K562 (cell line): ENCODE measurements at regions of chr16 and their contacts with region 1.

Region 1: DNA sequence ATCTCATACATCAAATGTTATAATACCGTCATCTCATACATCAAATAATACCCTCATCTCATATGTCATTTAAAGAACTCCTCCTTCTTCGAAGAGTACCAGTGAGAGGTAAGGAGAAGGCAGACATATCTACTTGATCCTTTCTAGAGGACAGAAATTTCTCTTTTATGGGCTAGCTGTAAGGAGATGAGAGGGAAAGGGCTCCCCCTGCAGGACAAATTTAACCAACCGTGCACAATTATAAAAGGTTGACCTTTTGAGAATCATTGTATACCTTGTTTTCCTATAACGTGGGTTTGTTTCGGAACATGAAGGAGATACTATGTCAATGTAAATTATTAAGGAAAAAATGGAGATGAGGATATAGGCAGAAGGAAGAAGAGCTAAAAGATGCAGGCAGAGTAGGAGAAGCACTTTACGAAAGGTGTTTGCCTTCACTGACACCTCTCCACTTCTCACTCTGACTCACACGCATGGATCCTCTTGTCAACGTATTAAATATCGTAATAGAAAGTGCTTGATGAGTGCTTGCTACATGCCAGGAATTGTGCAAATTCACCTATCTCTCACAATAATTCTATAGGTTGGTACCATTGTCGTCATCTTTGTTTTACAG is 465.9 kb upstream of the ERCC4 start:
- DNase-seq: peak; percentile 26 to 50 (median 38)
- ATAC-seq: peak; percentile 58; the same call in 2 of the 3 replicates
- H3K4me3 ChIP-seq: no peak overlapping the region
- H3K27ac ChIP-seq: no peak overlapping the region
- H3K4me1 ChIP-seq: no peaks in the 10 kb centered on the region
- H3K27me3 ChIP-seq: no peaks in the 10 kb centered on the region
- CTCF ChIP-seq: peak; percentile 35 to 72 (median 67); a peak in 5 of 6 replicates
- EP300 ChIP-seq: no peak
- POLR2A ChIP-seq: no peak
- RAD21 ChIP-seq: peak; percentile 53 to 71

Region 2: DNA sequence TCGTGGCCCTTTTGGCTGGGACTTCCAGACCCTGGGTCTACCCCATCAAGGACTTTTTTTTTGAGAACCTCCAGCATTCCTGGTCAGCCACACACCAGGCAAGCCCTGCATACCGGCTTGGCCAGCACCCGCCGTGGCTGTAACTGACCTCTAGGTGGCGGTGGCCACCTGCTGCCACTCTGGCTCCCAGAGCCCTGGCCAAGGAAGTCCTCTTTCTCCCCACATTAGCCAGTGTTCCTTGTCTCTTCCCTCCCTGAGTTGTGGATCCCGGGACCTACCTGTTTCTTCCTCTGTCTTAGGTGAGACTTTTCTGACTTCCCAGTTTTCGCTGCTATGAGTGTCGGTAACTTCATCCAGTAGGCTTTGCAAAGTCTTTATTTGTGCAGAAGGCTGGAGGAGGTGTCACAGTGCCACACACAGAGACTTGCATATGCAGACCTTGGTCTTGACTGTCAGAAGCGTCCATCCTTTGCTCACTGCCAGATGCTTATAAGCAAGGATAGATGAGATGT is 998.7 kb before region 1 on chr16:
- CTCF ChIA-PET with region 1: no interaction called
- POLR2A ChIA-PET with region 1: no interaction called
- in situ Hi-C with region 1: no loop called
- intact Hi-C with region 1: loop called (anchors 5 kb)
- DNase-seq: peak; percentile 59 to 69 (median 66)
- ATAC-seq: peak; percentile 99
- H3K4me3 ChIP-seq: no peak overlapping the region
- H3K27ac ChIP-seq: no peak overlapping the region
- H3K4me1 ChIP-seq: no peaks in the 10 kb centered on the region
- H3K27me3 ChIP-seq: peaks cover 0 to 55% of the 10 kb centered on the region in 2 experiments; a peak in 2 of 5 replicates
- CTCF ChIP-seq: peak; percentile 83 to 91 (median 84)
- EP300 ChIP-seq: no peak
- POLR2A ChIP-seq: no peak
- RAD21 ChIP-seq: peak; percentile 74 to 87

Region 3: DNA sequence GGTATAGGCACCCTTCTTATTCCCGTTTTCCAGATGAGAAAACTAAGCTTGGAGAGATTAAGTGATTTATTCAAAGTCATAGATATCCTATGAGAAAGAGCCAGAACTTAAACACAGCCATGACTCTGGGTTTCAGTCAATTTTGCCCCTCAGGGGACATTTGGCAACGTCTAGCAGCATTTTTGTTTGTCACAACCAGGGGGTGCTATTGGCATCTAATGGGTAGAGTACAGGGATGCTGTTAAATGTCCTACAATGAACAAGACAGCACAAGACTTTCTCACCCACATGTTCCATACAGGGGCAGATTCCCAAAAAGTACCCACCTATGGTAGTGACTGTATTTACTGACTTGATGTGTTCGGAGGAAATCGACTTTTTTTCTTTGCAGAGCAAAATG is 557.5 kb before region 1 on chr16:
- CTCF ChIA-PET with region 1: no interaction called
- POLR2A ChIA-PET with region 1: no interaction called
- in situ Hi-C with region 1: no loop called
- intact Hi-C with region 1: loop called (anchors 5 kb)
- DNase-seq: peak; percentile 19 to 53 (median 28)
- ATAC-seq: peak; percentile 81
- H3K4me3 ChIP-seq: no peak overlapping the region
- H3K27ac ChIP-seq: no peak overlapping the region
- H3K4me1 ChIP-seq: no peaks in the 10 kb centered on the region
- H3K27me3 ChIP-seq: peaks cover 0 to 9% of the 10 kb centered on the region in 2 experiments; a peak in 2 of 5 replicates
- CTCF ChIP-seq: peak; percentile 53 to 70 (median 58); a peak in 5 of 6 replicates
- EP300 ChIP-seq: no peak
- POLR2A ChIP-seq: no peak
- RAD21 ChIP-seq: peak; percentile 38 to 58

Region 4: DNA sequence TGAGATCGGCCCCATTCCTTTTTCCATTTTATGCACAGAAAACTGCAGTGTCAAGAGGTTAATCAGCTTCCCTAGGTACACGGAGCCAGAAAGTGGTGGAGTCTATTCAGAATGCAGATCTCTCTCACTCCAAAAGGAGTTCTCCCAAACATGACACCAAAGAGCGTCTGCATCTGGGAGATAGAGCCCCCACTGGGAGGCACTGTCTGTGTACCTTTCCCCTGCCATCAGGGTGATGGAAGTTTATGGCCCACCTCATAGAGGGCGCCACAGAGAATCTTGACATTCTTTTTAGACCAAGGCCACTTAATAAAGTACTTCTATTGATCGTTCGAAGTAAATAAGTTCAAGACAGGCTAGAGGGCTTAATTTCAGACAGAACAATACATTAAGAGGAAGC is 27.8 kb before region 1 on chr16:
- CTCF ChIA-PET with region 1: interaction called, 10 read pairs
- POLR2A ChIA-PET with region 1: interaction called, 3 read pairs
- in situ Hi-C with region 1: no loop called
- intact Hi-C with region 1: no loop called
- DNase-seq: peak; percentile 17 to 31 (median 24)
- ATAC-seq: peak; percentile 81
- H3K4me3 ChIP-seq: no peak overlapping the region
- H3K27ac ChIP-seq: no peak overlapping the region
- H3K4me1 ChIP-seq: no peaks in the 10 kb centered on the region
- H3K27me3 ChIP-seq: no peaks in the 10 kb centered on the region
- CTCF ChIP-seq: peak; percentile 62 to 98 (median 78)
- EP300 ChIP-seq: no peak
- POLR2A ChIP-seq: no peak
- RAD21 ChIP-seq: peak in 1 of 2 experiments; percentile 48; a peak in 2 of 4 replicates